Right ventricle myocardium inferior (tissue), 1 donor: ENCODE measurements at regions of chr18 and their contacts with region 1.

Region 1: GRCh38 chr18:66428795-66429194 is 175.1 kb downstream of the CDH19 start:
- DNase-seq: no peak
- ATAC-seq: no peak

Region 2: DNA sequence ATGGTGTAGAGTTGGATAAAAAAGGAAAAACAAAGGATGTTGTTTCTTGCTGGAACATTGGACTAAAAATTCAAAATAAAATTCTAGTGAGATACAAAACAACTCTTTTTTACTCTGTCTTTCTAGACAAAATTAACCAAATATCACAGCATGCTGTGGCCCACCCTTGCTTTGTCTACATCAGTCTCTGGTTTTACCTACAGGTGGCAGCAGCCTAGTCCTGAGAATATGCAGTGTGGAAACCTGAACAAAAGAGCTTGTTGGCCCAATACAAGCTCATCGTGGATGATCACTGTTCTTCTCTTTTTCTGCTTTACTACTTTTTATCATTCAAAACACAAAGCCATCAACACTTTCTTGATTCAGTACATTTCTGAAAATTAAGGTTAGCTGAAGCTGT is 35.3 kb before region 1 on chr18:
- intact Hi-C with region 1: loop called (anchors 5 kb)
- DNase-seq: no peak
- ATAC-seq: no peak

Region 3: GRCh38 chr18:66655407-66655806 is 226.6 kb after region 1 on chr18:
- intact Hi-C with region 1: no loop called
- DNase-seq: no peak
- ATAC-seq: no peak